Prostate gland (tissue), 2 donors: ENCODE measurements at regions of chr6 and their contacts with region 1.

Region 1: GRCh38 chr6:90478789-90479602 is 107.9 kb downstream of the MAP3K7 start:
- DNase-seq: peak; percentile 91
- H3K4me3 ChIP-seq: no peak overlapping the region
- H3K27ac ChIP-seq: no peak overlapping the region
- H3K4me1 ChIP-seq: no peaks in the 10 kb centered on the region
- H3K27me3 ChIP-seq: no peaks in the 10 kb centered on the region
- CTCF ChIP-seq: peak; percentile 85 to 93 (median 92)
- POLR2A ChIP-seq: no peak

Region 2: DNA sequence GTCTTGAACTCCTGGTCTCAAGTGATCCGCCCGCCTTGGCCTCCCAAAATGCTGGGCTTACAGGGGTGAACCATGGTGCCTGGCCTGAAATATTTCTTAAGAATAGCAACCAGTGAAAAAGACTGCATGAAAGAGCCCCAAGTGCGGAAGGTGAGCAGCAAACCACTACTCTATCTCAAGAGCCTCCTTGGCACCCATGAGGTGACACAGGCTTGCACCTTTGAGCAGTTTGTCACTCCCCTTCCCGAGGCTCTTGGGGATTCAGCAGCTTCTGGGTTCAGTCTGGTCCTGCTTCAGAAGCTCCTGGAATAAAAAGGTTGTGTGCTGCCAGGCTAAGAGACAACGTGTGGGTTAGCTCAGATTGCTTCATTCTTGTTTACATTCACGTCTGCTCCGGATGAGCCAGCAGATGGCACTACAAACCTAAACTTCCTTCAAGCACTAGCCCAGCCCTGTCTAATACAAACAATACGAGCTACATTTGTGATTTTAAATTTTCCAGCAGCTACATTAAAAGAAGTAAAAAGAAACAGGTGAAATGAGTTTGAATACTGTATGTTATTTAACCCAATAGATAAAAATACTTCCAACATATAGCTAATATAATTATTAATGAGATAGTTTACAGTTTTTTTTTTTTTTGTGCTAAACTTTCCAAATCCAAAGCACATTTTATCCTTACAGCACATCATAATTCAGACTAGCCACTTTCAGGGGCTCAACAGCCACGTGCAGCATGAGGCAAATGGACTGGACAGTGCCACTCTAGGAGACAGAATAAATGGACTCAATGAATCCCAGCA is 538.6 kb before region 1 on chr6:
- intact Hi-C with region 1: loop called (anchors 1 kb)
- DNase-seq: peak; percentile 90
- H3K4me3 ChIP-seq: no peak overlapping the region
- H3K27ac ChIP-seq: peak overlapping the region; percentile 77 to 82
- H3K4me1 ChIP-seq: peaks cover 8% of the 10 kb centered on the region
- H3K27me3 ChIP-seq: no peaks in the 10 kb centered on the region
- CTCF ChIP-seq: peak; percentile 26 to 87 (median 74)
- POLR2A ChIP-seq: no peak

Region 3: DNA sequence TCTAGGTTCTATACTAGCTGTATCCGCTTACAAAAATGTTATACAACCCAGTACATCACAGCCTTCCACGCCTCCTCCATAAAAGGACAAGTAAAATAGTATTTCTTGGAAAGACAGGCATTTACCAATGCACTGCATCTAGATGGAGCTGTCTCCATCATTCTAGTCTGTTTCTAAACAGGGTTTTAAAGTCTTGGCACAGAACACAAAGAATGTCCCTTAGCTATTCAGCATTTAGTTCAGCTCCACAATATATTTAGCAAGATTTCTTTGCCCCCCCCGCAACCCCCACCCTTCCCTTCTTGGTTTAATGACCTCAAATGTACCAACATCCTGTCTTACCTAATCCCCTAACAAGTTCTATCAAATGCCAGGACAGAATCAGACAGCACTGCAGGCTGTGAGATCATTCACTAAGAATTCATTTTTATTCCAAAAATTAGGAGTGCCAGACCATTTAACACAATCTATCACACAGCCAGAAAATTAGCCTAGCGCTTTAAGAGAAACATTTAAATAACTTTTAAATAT is 380.9 kb before region 1 on chr6:
- intact Hi-C with region 1: loop called (anchors 10 kb)
- DNase-seq: peak; percentile 75
- H3K4me3 ChIP-seq: no peak overlapping the region
- H3K27ac ChIP-seq: peak overlapping the region; percentile 48 to 67
- H3K4me1 ChIP-seq: no peaks in the 10 kb centered on the region
- H3K27me3 ChIP-seq: no peaks in the 10 kb centered on the region
- CTCF ChIP-seq: peak in 3 of 4 experiments; percentile 15 to 46 (median 43)
- POLR2A ChIP-seq: no peak

Region 4: GRCh38 chr6:90296346-90297114 is 182.5 kb before region 1 on chr6 and contains the start of gene BACH2:
- intact Hi-C with region 1: loop called (anchors 5 kb)
- DNase-seq: peak; percentile 95
- H3K4me3 ChIP-seq: peak within 1 kb of the TSS; percentile 77 to 89
- H3K27ac ChIP-seq: peak within 1 kb of the TSS; percentile 88 to 92
- H3K4me1 ChIP-seq: no peaks in the 10 kb centered on the region
- H3K27me3 ChIP-seq: no peaks in the 10 kb centered on the region
- CTCF ChIP-seq: peak in 2 of 4 experiments; percentile 23 to 54
- POLR2A ChIP-seq: peak; percentile 73
- total RNA-seq, gene BACH2: 5.2 to 5.7 TPM

Region 5: GRCh38 chr6:90393232-90393884 is 85.6 kb before region 1 on chr6:
- intact Hi-C with region 1: loop called (anchors 5 kb)
- DNase-seq: peak; percentile 63
- H3K4me3 ChIP-seq: no peak overlapping the region
- H3K27ac ChIP-seq: no peak overlapping the region
- H3K4me1 ChIP-seq: no peaks in the 10 kb centered on the region
- H3K27me3 ChIP-seq: no peaks in the 10 kb centered on the region
- CTCF ChIP-seq: peak; percentile 53 to 77 (median 72)
- POLR2A ChIP-seq: no peak